Tibial artery (tissue), 4 donors: ENCODE measurements at regions of chr20 and their contacts with region 1.

Region 1: DNA sequence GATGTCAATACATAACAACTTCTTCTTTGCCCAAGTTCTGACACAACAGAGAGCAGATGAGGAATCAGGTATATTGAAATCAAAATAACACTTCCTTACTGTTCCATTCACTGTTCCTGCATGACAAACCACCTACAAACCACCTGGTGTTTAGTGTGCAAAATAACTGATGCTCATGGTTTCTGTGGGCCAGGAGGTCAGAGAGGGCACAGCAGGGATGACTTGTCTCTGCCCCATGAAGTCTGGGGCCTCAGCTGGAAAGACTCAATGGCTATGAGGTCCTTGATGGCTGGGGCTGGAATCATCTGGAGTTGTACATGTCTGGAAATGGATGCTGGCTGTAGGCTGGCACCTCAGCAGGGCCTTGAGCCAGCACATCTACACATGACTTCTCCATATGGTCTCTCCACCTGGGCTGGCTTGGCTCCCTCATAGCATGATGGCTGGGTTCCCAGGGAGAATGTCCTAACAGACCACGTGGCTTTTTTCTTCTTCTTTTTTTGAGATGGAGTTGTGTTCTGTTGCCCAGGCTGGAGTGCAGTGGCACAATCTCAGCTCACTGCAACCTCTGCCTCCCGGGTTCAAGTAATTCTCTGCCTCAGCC is 7.4 kb upstream of the COX4I2 start:
- DNase-seq: no peak
- H3K4me3 ChIP-seq: no peak overlapping the region
- H3K27ac ChIP-seq: no peak overlapping the region
- H3K4me1 ChIP-seq: no peaks in the 10 kb centered on the region
- H3K27me3 ChIP-seq: no peaks in the 10 kb centered on the region
- CTCF ChIP-seq: no peak

Region 2: DNA sequence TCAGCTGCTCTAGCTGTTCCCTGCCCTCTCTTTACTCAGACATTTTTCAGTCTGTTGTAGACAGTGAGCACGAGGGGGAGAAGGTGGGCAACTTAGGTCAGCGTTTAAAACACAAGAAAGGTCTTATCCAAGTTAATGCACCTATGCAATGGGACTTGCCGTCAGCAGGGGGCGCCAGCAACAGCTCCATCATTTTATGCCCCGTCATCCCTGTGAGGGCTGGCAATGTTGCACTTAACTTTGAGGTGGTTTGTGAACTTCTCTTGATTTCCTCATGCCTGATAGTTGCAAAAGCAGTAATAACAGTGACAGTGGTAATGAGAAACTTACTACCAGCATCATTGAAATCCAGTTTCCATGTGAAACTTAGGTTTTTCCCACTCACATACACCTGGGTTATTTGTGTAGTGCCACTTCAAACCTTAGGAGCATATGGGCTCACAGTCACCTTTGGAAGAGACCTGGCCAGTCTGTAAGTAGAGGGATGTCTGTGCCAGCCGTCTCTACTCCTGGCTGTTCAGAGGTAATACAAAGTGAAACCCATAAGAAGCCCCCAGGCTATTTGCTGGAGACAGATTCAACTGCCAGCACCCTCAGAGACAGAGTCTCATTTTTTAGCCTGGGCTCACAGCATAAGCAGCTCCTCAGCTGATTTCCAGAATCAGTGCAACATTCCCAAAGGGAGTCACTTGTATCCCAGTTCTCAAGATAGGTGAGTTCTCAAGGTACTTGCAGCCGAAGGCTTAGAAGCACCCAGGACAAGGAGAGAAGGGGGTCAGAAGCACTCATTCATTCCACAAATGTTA is 70.0 kb before region 1 on chr20:
- intact Hi-C with region 1: no loop called
- DNase-seq: peak; percentile 67 to 88
- H3K4me3 ChIP-seq: no peak overlapping the region
- H3K27ac ChIP-seq: peak overlapping the region; percentile 72 to 75
- H3K4me1 ChIP-seq: peaks cover 0 to 29% (median 23%) of the 10 kb centered on the region in 4 donors
- H3K27me3 ChIP-seq: no peaks in the 10 kb centered on the region
- CTCF ChIP-seq: peak; percentile 86 to 87

Region 3: GRCh38 chr20:31642837-31643236 is 12.5 kb after region 1 on chr20:
- intact Hi-C with region 1: loop called (anchors 1 kb)
- DNase-seq: no peak
- H3K4me3 ChIP-seq: no peak overlapping the region
- H3K27ac ChIP-seq: no peak overlapping the region
- H3K4me1 ChIP-seq: peaks cover 0 to 1% (median under 1%) of the 10 kb centered on the region in 4 donors
- H3K27me3 ChIP-seq: peaks cover 0 to 27% of the 10 kb centered on the region in 2 donors
- CTCF ChIP-seq: no peak

Region 4: GRCh38 chr20:31712564-31713311 is 82.4 kb after region 1 on chr20:
- intact Hi-C with region 1: no loop called
- DNase-seq: peak; percentile 96
- H3K4me3 ChIP-seq: peak overlapping the region; percentile 31 to 42
- H3K27ac ChIP-seq: peak overlapping the region; percentile 97 to 99
- H3K4me1 ChIP-seq: peaks cover 0 to 100% (median 87%) of the 10 kb centered on the region in 4 donors
- H3K27me3 ChIP-seq: no peaks in the 10 kb centered on the region
- CTCF ChIP-seq: no peak